ENCODE measurements at regions of chr4 and their contacts with region 1.

Region 1: GRCh38 chr4:172202480-172203076 is 389.4 kb downstream of the GALNTL6 start:
- DNase-seq: no peak
- ATAC-seq: no peak
- H3K4me3 ChIP-seq: no peak overlapping the region
- H3K27ac ChIP-seq: no peak overlapping the region
- H3K4me1 ChIP-seq: no peaks in the 10 kb centered on the region
- H3K27me3 ChIP-seq: no peaks in the 10 kb centered on the region

Region 2: GRCh38 chr4:170990989-170991589 is 1211.5 kb before region 1 on chr4:
- intact Hi-C with region 1: loop called in 1 of 2 experiments (anchors 5 kb)
- DNase-seq: no peak
- ATAC-seq: no peak
- H3K4me3 ChIP-seq: no peak overlapping the region
- H3K27ac ChIP-seq: no peak overlapping the region
- H3K4me1 ChIP-seq: no peaks in the 10 kb centered on the region
- H3K27me3 ChIP-seq: no peaks in the 10 kb centered on the region

Measured in aorta (tissue), 5 donors.